Heart left ventricle (tissue), 16 donors: ENCODE measurements at regions of chr20 and their contacts with region 1.

Region 1: GRCh38 chr20:7285918-7286556 is 518.6 kb downstream of the BMP2 start:
- DNase-seq: peak; percentile 59 to 77 (median 67)
- ATAC-seq: peak; percentile 47 to 93 (median 87)
- H3K4me3 ChIP-seq: no peak overlapping the region
- H3K27ac ChIP-seq: no peak overlapping the region
- H3K4me1 ChIP-seq: no peaks in the 10 kb centered on the region
- H3K27me3 ChIP-seq: no peaks in the 10 kb centered on the region
- CTCF ChIP-seq: peak; percentile 76 to 92 (median 80)
- POLR2A ChIP-seq: no peak

Region 2: DNA sequence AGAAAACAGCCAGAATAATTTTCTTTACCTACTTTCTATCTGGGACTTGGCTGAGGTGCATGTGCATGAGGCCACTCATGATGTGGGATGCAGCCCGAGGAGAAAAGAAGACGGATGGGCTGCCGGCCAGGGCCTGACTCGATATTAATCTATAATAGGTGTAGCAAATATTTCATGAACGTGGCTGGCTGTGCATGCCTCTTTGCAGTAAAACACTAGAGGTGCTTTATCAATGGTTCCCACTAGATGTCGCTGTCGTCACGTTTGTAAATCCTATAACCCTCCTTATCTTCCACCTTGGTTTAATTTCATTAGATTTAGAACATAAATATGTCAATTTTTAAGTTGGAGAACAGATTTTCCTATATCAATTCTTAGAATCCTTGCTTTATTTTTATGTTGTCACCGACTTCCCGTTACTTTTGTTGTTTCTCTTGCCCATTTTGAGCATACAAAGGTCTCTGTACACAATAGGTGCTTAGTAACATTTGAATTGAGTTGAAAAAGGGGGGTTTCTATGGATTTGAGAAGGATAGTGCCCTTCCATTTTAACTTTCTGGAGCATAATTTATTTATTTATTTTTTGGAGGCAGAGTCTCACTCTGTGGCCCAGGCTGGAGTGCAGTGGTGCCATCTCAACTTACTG is 1143.6 kb before region 1 on chr20:
- intact Hi-C with region 1: loop called in 8 of 10 experiments (anchors 5 to 10 kb)
- DNase-seq: peak in 2 of 5 donors; percentile 28 to 34
- ATAC-seq: peak in 3 of 4 donors; percentile 60 to 63 (median 62)
- H3K4me3 ChIP-seq: no peak overlapping the region
- H3K27ac ChIP-seq: no peak overlapping the region
- H3K4me1 ChIP-seq: no peaks in the 10 kb centered on the region
- H3K27me3 ChIP-seq: peaks cover 0 to 6% (median 0%) of the 10 kb centered on the region in 9 donors
- CTCF ChIP-seq: peak; percentile 71 to 90 (median 84)
- POLR2A ChIP-seq: no peak

Region 3: GRCh38 chr20:6212903-6213302 is 1073.1 kb before region 1 on chr20:
- intact Hi-C with region 1: no loop called
- DNase-seq: no peak
- ATAC-seq: no peak
- H3K4me3 ChIP-seq: no peak overlapping the region
- H3K27ac ChIP-seq: no peak overlapping the region
- H3K4me1 ChIP-seq: no peaks in the 10 kb centered on the region
- H3K27me3 ChIP-seq: no peaks in the 10 kb centered on the region
- CTCF ChIP-seq: no peak
- POLR2A ChIP-seq: no peak

Region 4: GRCh38 chr20:6828794-6829423 is 457.1 kb before region 1 on chr20:
- intact Hi-C with region 1: loop called in 7 of 10 experiments (anchors 5 to 10 kb)
- DNase-seq: peak in 4 of 5 donors; percentile 32 to 69 (median 43)
- ATAC-seq: peak in 3 of 4 donors; percentile 77 to 86 (median 83)
- H3K4me3 ChIP-seq: no peak overlapping the region
- H3K27ac ChIP-seq: no peak overlapping the region
- H3K4me1 ChIP-seq: no peaks in the 10 kb centered on the region
- H3K27me3 ChIP-seq: no peaks in the 10 kb centered on the region
- CTCF ChIP-seq: peak; percentile 63 to 83 (median 68)
- POLR2A ChIP-seq: no peak

Region 5: DNA sequence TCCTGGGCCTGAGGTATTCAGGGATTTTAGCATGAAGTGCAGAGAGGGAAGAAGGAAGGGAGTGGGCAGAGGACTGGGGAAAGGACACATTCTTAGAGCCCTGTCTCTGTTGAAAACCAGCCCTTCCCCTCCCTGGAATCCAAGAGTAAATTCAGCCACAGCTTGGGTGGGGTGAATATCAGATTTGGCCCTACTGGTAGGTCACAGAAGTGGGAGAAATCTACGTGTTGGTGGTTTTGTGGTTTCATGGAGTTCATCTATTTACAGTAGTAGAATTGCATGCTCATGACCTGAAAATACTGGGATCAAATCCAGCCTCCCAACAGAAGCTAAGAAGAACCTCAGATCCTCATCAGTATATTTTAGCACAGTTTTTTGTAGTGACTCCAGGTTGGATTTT is 114.1 kb before region 1 on chr20:
- intact Hi-C with region 1: loop called in 1 of 10 experiments (anchors 10 kb)
- DNase-seq: no peak
- ATAC-seq: no peak
- H3K4me3 ChIP-seq: no peak overlapping the region
- H3K27ac ChIP-seq: no peak overlapping the region
- H3K4me1 ChIP-seq: no peaks in the 10 kb centered on the region
- H3K27me3 ChIP-seq: no peaks in the 10 kb centered on the region
- CTCF ChIP-seq: no peak
- POLR2A ChIP-seq: no peak

Region 6: GRCh38 chr20:7323955-7324354 is 37.9 kb after region 1 on chr20:
- intact Hi-C with region 1: no loop called
- DNase-seq: no peak
- ATAC-seq: no peak
- H3K4me3 ChIP-seq: no peak overlapping the region
- H3K27ac ChIP-seq: no peak overlapping the region
- H3K4me1 ChIP-seq: no peaks in the 10 kb centered on the region
- H3K27me3 ChIP-seq: peaks cover 0 to under 1% (median 0%) of the 10 kb centered on the region in 9 donors
- CTCF ChIP-seq: no peak
- POLR2A ChIP-seq: no peak

Region 7: DNA sequence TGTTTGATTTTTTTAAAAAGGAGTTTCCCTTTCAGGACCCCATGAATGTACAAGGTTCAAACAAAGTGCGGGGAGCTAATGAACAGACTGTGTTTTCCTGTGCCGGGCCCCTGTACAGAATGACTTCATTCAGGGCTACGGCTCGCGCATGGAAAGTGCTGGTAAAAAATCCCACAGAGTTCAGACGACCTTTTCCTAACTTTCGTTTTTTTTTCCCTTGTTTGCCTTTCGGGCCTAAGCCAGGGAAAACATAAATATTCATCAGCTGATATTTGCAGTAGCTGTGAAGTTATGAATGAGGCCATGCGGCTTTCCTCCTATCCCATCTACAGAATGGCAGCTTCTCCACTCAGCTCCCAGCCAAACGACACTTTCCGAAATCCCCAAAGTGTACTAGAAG is 580.2 kb after region 1 on chr20:
- intact Hi-C with region 1: loop called in 1 of 10 experiments (anchors 10 kb)
- DNase-seq: no peak
- ATAC-seq: peak in 2 of 4 donors; percentile 26 to 39
- H3K4me3 ChIP-seq: peak overlapping the region in 4 of 12 donors; percentile 5 to 32 (median 10)
- H3K27ac ChIP-seq: peak overlapping the region in 1 of 12 donors; percentile 22
- H3K4me1 ChIP-seq: no peaks in the 10 kb centered on the region
- H3K27me3 ChIP-seq: peaks cover 0 to 5% (median 0%) of the 10 kb centered on the region in 9 donors
- CTCF ChIP-seq: no peak
- POLR2A ChIP-seq: no peak